ENCODE measurements at regions of chr1 and their contacts with region 1.

Region 1: GRCh38 chr1:53182111-53182593 is 14.5 kb upstream of the CPT2 start:
- DNase-seq: peak; percentile 84
- H3K4me3 ChIP-seq: no peak overlapping the region
- H3K27ac ChIP-seq: no peak overlapping the region
- H3K4me1 ChIP-seq: no peaks in the 10 kb centered on the region
- H3K27me3 ChIP-seq: no peaks in the 10 kb centered on the region
- CTCF ChIP-seq: peak; percentile 98

Region 2: DNA sequence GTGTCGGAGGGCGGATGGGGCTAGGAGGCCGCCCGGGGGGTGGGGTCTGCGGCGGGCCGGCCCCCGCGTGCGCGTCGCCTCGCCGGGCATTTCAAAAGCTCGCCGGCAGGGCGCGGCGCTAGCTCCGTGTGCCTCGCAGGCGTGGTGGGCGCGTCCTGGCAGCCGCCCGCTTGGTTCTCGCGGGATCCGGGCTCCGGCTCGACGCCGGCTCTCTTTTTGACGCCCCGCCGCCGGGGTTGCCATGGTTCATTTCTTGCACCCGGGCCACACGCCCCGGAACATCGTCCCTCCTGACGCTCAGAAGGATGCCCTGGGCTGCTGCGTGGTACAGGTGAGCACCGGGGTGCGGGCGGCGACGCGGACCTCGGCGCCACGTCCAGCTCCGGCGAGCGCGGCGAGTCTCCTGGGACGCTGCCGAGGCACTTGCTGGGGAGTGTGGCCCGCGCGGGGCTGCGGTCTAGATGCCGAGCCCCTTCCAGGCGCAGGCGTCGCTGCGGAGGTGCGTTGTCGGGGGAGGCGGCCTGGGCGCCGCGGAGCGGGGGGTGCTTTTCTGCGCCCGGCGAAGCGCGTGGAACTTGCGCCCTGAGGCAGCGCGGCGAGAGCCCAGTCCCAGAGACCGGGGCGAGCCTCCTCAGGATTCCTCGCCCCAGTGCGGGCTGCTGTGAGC is 339.4 kb before region 1 on chr1 and contains the start of gene ZYG11A:
- CTCF ChIA-PET with region 1: no interaction called
- POLR2A ChIA-PET with region 1: no interaction called
- intact Hi-C with region 1: loop called (anchors 10 kb)
- DNase-seq: peak; percentile 87
- H3K4me3 ChIP-seq: peak within 1 kb of the TSS; percentile 32
- H3K27ac ChIP-seq: no peak within 1 kb of the TSS
- H3K4me1 ChIP-seq: peaks cover 6% of the 10 kb centered on the region
- H3K27me3 ChIP-seq: peaks cover 13% of the 10 kb centered on the region
- CTCF ChIP-seq: 0 out of 2 replicates have a peak, but pooled peaks have one; percentile 19
- total RNA-seq, gene ZYG11A: 0.17 and 0.31 TPM in 2 replicates

Region 3: GRCh38 chr1:52904927-52905698 is 277.0 kb before region 1 on chr1:
- CTCF ChIA-PET with region 1: interaction called, 3 read pairs
- POLR2A ChIA-PET with region 1: no interaction called
- intact Hi-C with region 1: loop called (anchors 5 kb)
- DNase-seq: peak; percentile 67
- H3K4me3 ChIP-seq: no peak overlapping the region
- H3K27ac ChIP-seq: no peak overlapping the region
- H3K4me1 ChIP-seq: no peaks in the 10 kb centered on the region
- H3K27me3 ChIP-seq: no peaks in the 10 kb centered on the region
- CTCF ChIP-seq: peak; percentile 62

Region 4: DNA sequence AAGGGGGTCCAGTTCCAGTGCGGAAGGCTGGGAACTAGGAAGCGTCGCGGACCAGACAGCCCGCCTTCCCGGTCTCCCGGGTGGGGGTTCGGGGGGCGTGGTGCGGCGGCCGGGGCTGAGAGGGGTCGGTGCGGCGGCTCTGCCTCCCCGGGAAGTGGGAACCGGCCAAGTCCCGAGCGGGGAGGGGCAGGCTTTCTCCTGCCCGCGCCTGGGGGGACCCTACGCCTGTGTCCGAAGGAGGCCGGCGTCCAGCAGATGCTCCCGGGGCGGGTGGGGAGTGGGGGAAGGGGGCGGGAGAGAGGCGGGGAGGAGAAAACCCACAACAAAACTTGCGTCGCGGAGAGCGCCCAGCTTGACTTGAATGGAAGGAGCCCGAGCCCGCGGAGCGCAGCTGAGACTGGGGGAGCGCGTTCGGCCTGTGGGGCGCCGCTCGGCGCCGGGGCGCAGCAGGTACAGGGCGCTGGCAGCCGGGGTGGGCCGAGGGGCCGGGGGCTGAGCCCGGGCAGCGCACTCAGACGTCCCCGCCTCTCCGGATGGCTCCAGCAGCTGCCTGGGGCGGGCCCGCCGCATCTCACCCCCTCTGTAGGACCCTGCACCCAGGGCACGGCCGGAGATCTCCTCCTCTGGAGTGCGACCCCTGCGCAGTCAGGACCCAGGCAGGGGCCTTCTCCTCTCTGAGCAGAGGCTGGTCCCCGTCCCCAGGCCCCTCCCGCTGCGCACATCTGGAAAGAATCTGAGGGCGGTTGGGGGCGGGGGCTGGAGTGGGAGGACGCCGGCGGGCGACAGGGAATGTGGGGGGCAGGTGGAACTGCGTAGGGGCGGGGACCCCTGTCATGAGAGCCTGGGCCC is 120.1 kb before region 1 on chr1 and contains the start of gene PODN:
- CTCF ChIA-PET with region 1: no interaction called
- POLR2A ChIA-PET with region 1: no interaction called
- intact Hi-C with region 1: loop called (anchors 10 kb)
- DNase-seq: peak; percentile 37
- H3K4me3 ChIP-seq: peak within 1 kb of the TSS; percentile 60
- H3K27ac ChIP-seq: no peak within 1 kb of the TSS
- H3K4me1 ChIP-seq: no peaks in the 10 kb centered on the region
- H3K27me3 ChIP-seq: peaks cover 10% of the 10 kb centered on the region
- CTCF ChIP-seq: no peak
- total RNA-seq, gene PODN: 0.17 TPM in 1 of 2 replicates, not detected in the other